A673 (cell line): ENCODE measurements at regions of chr3 and their contacts with region 1.

Region 1: DNA sequence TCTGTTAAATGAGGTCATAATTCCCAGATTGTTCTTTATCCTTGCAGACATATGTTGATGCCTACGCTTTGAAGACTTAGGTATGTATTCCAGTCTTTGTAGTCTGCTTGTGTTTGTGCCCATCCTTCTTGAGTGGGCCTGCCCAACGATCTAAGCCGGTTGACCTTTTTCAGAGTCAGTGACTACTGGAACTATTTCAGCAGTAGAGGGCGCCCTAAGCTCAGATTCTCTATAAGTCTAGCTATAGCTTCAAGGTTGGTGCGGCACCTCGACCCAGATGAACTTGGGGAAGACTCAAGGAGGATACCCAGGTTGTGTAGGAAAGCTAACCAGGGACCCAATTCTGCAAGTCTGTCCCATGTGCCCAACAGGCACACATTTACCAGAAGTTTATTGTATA is 228.8 kb upstream of the PPP2R3A start:
- DNase-seq: peak; percentile 56
- H3K4me3 ChIP-seq: no peak overlapping the region
- H3K27ac ChIP-seq: no peak overlapping the region
- H3K4me1 ChIP-seq: no peaks in the 10 kb centered on the region
- H3K27me3 ChIP-seq: peaks cover 4% of the 10 kb centered on the region
- CTCF ChIP-seq: peak; percentile 54

Region 2: GRCh38 chr3:135471911-135472310 is 264.8 kb before region 1 on chr3:
- CTCF ChIA-PET with region 1: no interaction called
- POLR2A ChIA-PET with region 1: no interaction called
- intact Hi-C with region 1: no loop called
- DNase-seq: no peak
- H3K4me3 ChIP-seq: no peak overlapping the region
- H3K27ac ChIP-seq: no peak overlapping the region
- H3K4me1 ChIP-seq: no peaks in the 10 kb centered on the region
- H3K27me3 ChIP-seq: peaks cover 4% of the 10 kb centered on the region
- CTCF ChIP-seq: no peak

Region 3: DNA sequence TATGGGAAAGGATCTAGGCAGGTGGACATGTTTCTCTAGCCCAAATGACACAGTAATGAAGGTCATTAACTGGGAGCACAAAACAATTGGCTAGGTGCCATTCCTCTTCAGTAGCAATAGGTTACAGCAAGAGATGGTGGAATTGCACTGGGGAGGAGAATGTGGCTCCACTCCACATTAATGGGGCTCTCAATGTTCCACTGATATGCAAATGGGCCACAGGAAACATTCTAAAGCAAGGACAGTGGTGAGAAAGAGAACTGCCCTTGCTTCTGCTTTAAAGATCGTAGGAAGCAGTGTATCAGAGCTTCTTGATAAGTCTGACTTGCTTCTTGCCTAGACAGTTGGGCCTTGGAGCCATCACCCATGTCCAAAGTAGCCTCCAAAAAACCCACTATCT is 42.6 kb before region 1 on chr3:
- CTCF ChIA-PET with region 1: no interaction called
- POLR2A ChIA-PET with region 1: no interaction called
- intact Hi-C with region 1: no loop called
- DNase-seq: no peak
- H3K4me3 ChIP-seq: no peak overlapping the region
- H3K27ac ChIP-seq: no peak overlapping the region
- H3K4me1 ChIP-seq: no peaks in the 10 kb centered on the region
- H3K27me3 ChIP-seq: no peaks in the 10 kb centered on the region
- CTCF ChIP-seq: no peak

Region 4: DNA sequence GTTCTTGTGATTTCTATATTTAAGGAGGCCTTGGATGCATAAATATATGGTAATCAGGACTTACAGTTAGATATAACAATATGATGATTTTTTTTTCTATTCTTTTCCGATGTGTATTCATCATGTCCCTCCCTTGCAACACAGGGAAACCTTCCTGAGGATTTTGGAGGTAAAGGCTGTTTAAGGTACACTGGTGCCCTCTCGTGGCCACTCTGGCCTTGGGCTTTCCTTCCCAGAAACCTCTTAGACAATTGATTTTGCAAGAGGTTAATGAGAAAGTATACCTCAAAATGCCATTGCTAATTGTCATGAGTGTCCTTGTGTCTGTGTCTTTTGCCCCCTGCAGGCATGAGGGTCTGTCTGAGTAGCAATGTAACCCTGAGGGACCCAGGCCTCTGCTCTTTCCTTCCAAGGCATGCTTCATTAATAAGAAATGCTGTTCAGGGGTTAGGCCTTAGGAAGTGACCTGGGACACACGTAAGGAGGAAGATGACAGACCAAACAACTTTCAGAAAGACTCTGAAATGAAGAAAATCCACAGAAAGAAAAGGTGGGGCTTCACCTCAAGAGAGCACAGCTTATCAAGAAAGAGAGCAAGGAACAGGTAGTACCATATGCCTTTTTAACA is 158.5 kb after region 1 on chr3:
- CTCF ChIA-PET with region 1: no interaction called
- POLR2A ChIA-PET with region 1: no interaction called
- intact Hi-C with region 1: loop called (anchors 2 kb)
- DNase-seq: peak; percentile 78
- H3K4me3 ChIP-seq: no peak overlapping the region
- H3K27ac ChIP-seq: no peak overlapping the region
- H3K4me1 ChIP-seq: no peaks in the 10 kb centered on the region
- H3K27me3 ChIP-seq: peaks cover 23% of the 10 kb centered on the region
- CTCF ChIP-seq: peak; percentile 90